Cardiac septum (tissue), 1 donor: ENCODE measurements at regions of chr13 and their contacts with region 1.

Region 1: GRCh38 chr13:97855570-97856303 is 97.7 kb upstream of the IPO5 start:
- DNase-seq: no peak

Region 2: DNA sequence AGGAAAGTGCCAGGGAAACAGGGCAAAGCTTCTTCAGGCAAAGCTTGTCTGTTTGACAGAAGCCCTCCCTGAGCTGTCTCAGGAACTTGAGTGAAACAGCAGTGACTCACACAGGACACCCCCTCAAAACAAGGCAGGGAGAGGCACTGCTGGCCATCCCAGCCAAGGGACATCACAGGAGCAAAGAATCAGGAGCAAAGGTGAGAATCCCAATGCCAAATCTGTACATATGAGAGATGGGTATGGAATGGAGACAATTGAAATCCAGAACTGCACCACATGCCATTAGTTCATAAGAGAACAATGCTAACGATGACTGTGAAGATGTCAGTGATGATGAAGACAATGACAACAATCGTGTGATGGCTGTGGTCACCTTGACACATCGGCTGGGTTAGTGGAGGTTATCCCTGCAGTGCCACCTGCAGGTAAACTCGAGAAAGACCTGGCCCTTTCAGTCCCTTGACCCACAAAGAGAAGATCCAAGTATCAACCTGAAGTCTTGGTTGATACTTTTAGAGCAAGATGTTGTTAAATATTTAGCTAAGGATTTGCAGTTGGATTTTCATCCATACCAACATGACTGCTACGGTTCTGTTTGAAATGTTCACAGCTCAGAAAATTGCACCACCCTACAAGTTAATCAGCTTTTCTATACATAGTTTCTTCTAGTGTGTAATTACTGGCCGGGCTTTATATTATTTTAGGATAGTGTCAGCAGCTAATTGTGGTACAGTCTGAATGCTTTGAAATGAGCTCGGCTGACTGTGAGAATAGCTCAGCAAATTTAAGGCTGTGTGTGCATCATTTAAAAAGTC is 55.8 kb after region 1 on chr13:
- intact Hi-C with region 1: loop called (anchors 2 kb)
- DNase-seq: no peak

Region 3: GRCh38 chr13:97975848-97976609 is 120.3 kb after region 1 on chr13:
- intact Hi-C with region 1: loop called (anchors 5 kb)
- DNase-seq: peak; percentile 94